Activated B cell treated with CpG ODN at 0.5 μM for 24 hours (primary cell): ENCODE measurements at regions of chr1 and their contacts with region 1.

Region 1: GRCh38 chr1:157138220-157139051 is at the start of gene ETV3:
- DNase-seq: peak; percentile 72
- ATAC-seq: peak; percentile 86
- H3K4me3 Mint-ChIP-seq: peak within 1 kb of the TSS; percentile 94
- H3K27ac Mint-ChIP-seq: peak within 1 kb of the TSS; percentile 93
- H3K4me1 Mint-ChIP-seq: peaks cover 43% of the 10 kb centered on the region
- H3K27me3 Mint-ChIP-seq: no peaks in the 10 kb centered on the region
- CTCF ChIP-seq: no peak
- total RNA-seq, gene ETV3: 26.6 and 31.3 TPM in 2 replicates

Region 2: DNA sequence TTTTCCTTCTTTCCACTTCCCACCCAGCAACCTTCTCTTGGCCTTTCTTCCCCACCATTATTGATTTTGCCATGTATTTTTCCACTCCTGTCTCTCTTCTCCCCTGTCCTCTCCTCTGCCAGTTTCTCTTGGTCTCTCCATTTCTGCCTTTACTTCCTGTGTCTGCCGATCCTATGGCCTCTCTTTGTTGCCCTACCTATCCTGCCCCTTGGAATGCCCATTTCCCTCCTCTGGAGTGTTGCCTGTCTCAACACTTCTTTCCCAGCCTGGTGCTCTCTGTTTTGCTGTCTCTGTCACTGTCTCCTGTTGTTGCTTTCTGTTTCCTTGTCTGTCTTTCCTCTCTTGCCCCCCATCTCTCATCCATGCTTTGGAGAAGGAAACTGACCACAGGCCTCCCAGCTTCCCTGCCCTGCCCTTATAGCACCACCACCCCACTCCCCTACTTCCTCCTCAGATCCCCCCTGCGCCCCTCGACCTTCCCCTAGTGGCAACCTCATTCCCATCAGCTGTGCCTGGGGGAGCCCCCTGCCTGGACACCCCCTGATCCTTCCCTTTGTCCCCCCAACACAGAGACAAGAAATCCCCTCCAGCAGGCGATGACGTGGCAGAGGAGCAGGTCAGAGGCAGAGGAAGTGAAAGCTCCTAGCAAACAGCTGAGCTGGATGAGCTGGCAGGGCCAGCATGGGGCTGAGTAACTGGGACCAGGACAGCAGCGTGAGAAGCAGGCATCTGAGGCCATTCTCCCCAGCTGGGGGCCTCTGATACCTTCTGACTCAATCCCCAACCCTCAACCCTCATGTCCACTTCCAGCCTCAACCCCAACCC is 32.2 kb before region 1 on chr1:
- CTCF ChIA-PET with region 1: no interaction called
- POLR2A ChIA-PET with region 1: interaction called, 7 read pairs
- intact Hi-C with region 1: loop called (anchors 2 kb)
- DNase-seq: peak; percentile 37
- ATAC-seq: peak; percentile 90
- H3K4me3 Mint-ChIP-seq: peak overlapping the region; percentile 26
- H3K27ac Mint-ChIP-seq: peak overlapping the region; percentile 59
- H3K4me1 Mint-ChIP-seq: peaks cover 26% of the 10 kb centered on the region
- H3K27me3 Mint-ChIP-seq: peaks cover 35% of the 10 kb centered on the region
- CTCF ChIP-seq: no peak

Region 3: GRCh38 chr1:157156058-157156541 is 17.7 kb after region 1 on chr1:
- CTCF ChIA-PET with region 1: interaction called, 12 read pairs
- POLR2A ChIA-PET with region 1: interaction called, 4 read pairs
- intact Hi-C with region 1: no loop called
- DNase-seq: peak; percentile 73
- ATAC-seq: peak; percentile 80
- H3K4me3 Mint-ChIP-seq: no peak overlapping the region
- H3K27ac Mint-ChIP-seq: no peak overlapping the region
- H3K4me1 Mint-ChIP-seq: peaks cover 3% of the 10 kb centered on the region
- H3K27me3 Mint-ChIP-seq: peaks cover 41% of the 10 kb centered on the region
- CTCF ChIP-seq: peak; percentile 68